ENCODE measurements at regions of chr13 and their contacts with region 1.

Region 1: GRCh38 chr13:69755101-69755500 is 352.5 kb upstream of the ATXN8OS start:
- DNase-seq: no peak
- H3K4me3 ChIP-seq: no peak overlapping the region
- H3K27ac ChIP-seq: no peak overlapping the region
- H3K4me1 ChIP-seq: no peaks in the 10 kb centered on the region
- H3K27me3 ChIP-seq: no peaks in the 10 kb centered on the region
- CTCF ChIP-seq: no peak
- POLR2A ChIP-seq: no peak

Region 2: GRCh38 chr13:69737129-69737935 is 17.8 kb before region 1 on chr13:
- intact Hi-C with region 1: loop called (anchors 1 kb)
- DNase-seq: no peak
- H3K4me3 ChIP-seq: no peak overlapping the region
- H3K27ac ChIP-seq: no peak overlapping the region
- H3K4me1 ChIP-seq: no peaks in the 10 kb centered on the region
- H3K27me3 ChIP-seq: no peaks in the 10 kb centered on the region
- CTCF ChIP-seq: no peak
- POLR2A ChIP-seq: no peak

Region 3: GRCh38 chr13:69769608-69770007 is 14.5 kb after region 1 on chr13:
- intact Hi-C with region 1: no loop called
- DNase-seq: no peak
- H3K4me3 ChIP-seq: no peak overlapping the region
- H3K27ac ChIP-seq: no peak overlapping the region
- H3K4me1 ChIP-seq: no peaks in the 10 kb centered on the region
- H3K27me3 ChIP-seq: no peaks in the 10 kb centered on the region
- CTCF ChIP-seq: no peak
- POLR2A ChIP-seq: no peak

Region 4: GRCh38 chr13:71285700-71286099 is 1530.6 kb after region 1 on chr13:
- intact Hi-C with region 1: no loop called
- DNase-seq: no peak
- H3K4me3 ChIP-seq: no peak overlapping the region
- H3K27ac ChIP-seq: no peak overlapping the region
- H3K4me1 ChIP-seq: no peaks in the 10 kb centered on the region
- H3K27me3 ChIP-seq: no peaks in the 10 kb centered on the region
- CTCF ChIP-seq: no peak
- POLR2A ChIP-seq: no peak

Measured in breast epithelium (tissue), 4 donors.